Activated CD4-positive, alpha-beta memory T cell treated with anti-CD3 and anti-CD28 coated beads for 36 hours (primary cell): ENCODE measurements at regions of chr1 and their contacts with region 1.

Region 1: GRCh38 chr1:40862008-40862863 is at the start of gene CITED4:
- DNase-seq: peak; percentile 96
- H3K4me3 Mint-ChIP-seq: peak within 1 kb of the TSS; percentile 87
- H3K27ac Mint-ChIP-seq: peak within 1 kb of the TSS; percentile 97
- H3K4me1 Mint-ChIP-seq: peaks cover 10% of the 10 kb centered on the region
- H3K27me3 Mint-ChIP-seq: peaks cover 3% of the 10 kb centered on the region
- total RNA-seq, gene CITED4: 1.9 to 2.1 TPM

Region 2: DNA sequence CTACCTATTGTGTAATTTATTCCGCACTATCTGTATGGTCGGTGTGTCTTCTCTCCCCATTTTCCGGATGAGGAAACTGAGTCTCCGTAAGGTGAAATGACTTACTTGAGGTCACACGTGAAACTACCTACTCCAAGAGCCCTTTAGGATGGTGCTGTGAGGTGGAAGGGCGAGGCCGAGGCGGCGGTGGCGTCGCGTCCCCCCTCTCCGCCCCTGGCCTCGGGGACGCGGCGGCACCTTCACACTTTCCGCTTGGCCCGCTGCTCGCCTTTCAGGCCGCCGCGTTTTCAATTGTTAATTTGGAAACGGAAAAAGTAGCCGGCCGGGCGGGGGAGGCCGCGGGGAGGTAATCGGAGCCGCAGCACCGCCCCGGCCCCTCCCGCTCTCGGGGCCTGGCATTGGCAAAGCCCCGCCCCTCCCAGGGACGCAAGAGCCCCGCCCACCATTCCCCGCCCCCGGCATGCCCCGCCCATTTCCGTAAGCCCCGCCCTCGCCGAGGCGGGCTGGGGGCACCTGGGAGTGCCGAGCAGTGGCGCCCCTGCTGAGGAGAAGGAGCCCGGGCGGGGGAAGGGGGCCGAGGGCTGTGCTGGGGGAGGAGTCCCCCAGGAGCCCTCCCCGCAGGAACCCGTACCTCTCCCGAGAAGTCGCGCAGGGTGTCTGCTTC is 60.0 kb before region 1 on chr1:
- CTCF ChIA-PET with region 1: no interaction called
- POLR2A ChIA-PET with region 1: no interaction called
- intact Hi-C with region 1: loop called (anchors 1 kb)
- DNase-seq: peak; percentile 92
- H3K4me3 Mint-ChIP-seq: peak overlapping the region; percentile 29
- H3K27ac Mint-ChIP-seq: peak overlapping the region; percentile 33
- H3K4me1 Mint-ChIP-seq: peaks cover 20% of the 10 kb centered on the region
- H3K27me3 Mint-ChIP-seq: no peaks in the 10 kb centered on the region

Region 3: GRCh38 chr1:40877698-40878097 is 15.5 kb after region 1 on chr1:
- CTCF ChIA-PET with region 1: interaction called, 5 read pairs
- POLR2A ChIA-PET with region 1: interaction called, 4 read pairs
- intact Hi-C with region 1: loop called (anchors 1 kb)
- DNase-seq: peak; percentile 49
- H3K4me3 Mint-ChIP-seq: no peak overlapping the region
- H3K27ac Mint-ChIP-seq: no peak overlapping the region
- H3K4me1 Mint-ChIP-seq: peaks cover 30% of the 10 kb centered on the region
- H3K27me3 Mint-ChIP-seq: peaks cover 2% of the 10 kb centered on the region

Region 4: GRCh38 chr1:40936931-40937339 is 74.7 kb after region 1 on chr1:
- CTCF ChIA-PET with region 1: no interaction called
- POLR2A ChIA-PET with region 1: no interaction called
- intact Hi-C with region 1: no loop called
- DNase-seq: no peak
- H3K4me3 Mint-ChIP-seq: no peak overlapping the region
- H3K27ac Mint-ChIP-seq: no peak overlapping the region
- H3K4me1 Mint-ChIP-seq: no peaks in the 10 kb centered on the region
- H3K27me3 Mint-ChIP-seq: no peaks in the 10 kb centered on the region